Naive thymus-derived CD4-positive, alpha-beta T cell (primary cell): ENCODE measurements at regions of chr6 and their contacts with region 1.

Region 1: DNA sequence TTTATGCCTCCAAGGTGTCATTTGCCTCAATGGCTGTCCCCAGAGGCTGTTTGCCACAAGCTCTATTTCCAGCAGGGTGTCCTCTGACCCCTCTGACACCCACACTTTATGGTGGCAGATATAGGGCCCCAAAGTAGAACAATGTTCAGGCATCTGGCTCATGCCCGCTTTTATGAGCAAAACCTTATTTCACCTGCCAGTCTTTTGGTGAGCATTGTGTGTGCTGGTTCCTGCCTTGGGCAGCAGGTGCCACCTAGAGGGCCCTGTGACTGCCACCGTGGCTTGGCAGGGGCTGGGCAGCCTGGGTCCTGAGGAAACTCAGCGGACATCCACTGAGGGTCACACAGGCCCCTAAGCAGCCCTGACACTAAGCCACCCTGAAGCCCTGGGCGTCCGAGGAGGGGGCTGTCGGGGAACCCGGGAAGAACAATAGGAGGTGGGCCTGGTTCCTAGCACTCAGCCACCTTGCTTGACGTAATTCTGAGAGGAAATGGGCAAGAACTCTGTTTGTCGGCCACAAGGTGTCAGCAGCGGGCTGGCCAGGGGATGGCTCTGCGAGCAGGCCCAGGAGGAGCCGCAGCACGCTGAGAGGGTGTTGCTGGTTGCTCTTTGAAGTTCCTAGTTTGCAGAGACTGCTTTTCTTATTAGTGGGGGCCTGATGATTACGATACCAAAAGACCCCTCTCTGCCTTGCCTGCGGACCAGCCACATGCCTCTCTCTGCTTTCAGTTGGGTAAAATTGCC is 148.9 kb downstream of the SCML4 start:
- DNase-seq: peak; percentile 77 to 90 (median 86)
- ATAC-seq: peak; percentile 97
- H3K4me3 ChIP-seq: peak overlapping the region; percentile 36
- H3K4me3 Mint-ChIP-seq: peak overlapping the region in 8 of 10 donors; percentile 49 to 83 (median 76)
- H3K27ac ChIP-seq: peak overlapping the region; percentile 71
- H3K27ac Mint-ChIP-seq: peak overlapping the region; percentile 74 to 96 (median 85)
- H3K4me1 ChIP-seq: peaks cover 0 to 10% of the 10 kb centered on the region in 2 donors
- H3K4me1 Mint-ChIP-seq: peaks cover 0 to 17% (median 9%) of the 10 kb centered on the region in 7 donors
- H3K27me3 ChIP-seq: no peaks in the 10 kb centered on the region
- H3K27me3 Mint-ChIP-seq: peaks cover 0 to 15% (median 0%) of the 10 kb centered on the region in 5 donors

Region 2: GRCh38 chr6:106339334-106340029 is 1335.7 kb before region 1 on chr6:
- CTCF ChIA-PET with region 1: no interaction called
- POLR2A ChIA-PET with region 1: no interaction called
- intact Hi-C with region 1: loop called in 1 of 2 experiments (anchors 10 kb)
- DNase-seq: peak in 8 of 9 donors; percentile 19 to 50 (median 35)
- ATAC-seq: peak; percentile 88
- H3K4me3 ChIP-seq: no peak overlapping the region
- H3K4me3 Mint-ChIP-seq: peak overlapping the region in 7 of 10 donors; percentile 15 to 67 (median 44)
- H3K27ac ChIP-seq: no peak overlapping the region
- H3K27ac Mint-ChIP-seq: no peak overlapping the region
- H3K4me1 ChIP-seq: no peaks in the 10 kb centered on the region
- H3K4me1 Mint-ChIP-seq: peaks cover 0 to 9% (median 6%) of the 10 kb centered on the region in 7 donors
- H3K27me3 ChIP-seq: no peaks in the 10 kb centered on the region
- H3K27me3 Mint-ChIP-seq: peaks cover 14 to 44% (median 20%) of the 10 kb centered on the region in 5 donors

Region 3: DNA sequence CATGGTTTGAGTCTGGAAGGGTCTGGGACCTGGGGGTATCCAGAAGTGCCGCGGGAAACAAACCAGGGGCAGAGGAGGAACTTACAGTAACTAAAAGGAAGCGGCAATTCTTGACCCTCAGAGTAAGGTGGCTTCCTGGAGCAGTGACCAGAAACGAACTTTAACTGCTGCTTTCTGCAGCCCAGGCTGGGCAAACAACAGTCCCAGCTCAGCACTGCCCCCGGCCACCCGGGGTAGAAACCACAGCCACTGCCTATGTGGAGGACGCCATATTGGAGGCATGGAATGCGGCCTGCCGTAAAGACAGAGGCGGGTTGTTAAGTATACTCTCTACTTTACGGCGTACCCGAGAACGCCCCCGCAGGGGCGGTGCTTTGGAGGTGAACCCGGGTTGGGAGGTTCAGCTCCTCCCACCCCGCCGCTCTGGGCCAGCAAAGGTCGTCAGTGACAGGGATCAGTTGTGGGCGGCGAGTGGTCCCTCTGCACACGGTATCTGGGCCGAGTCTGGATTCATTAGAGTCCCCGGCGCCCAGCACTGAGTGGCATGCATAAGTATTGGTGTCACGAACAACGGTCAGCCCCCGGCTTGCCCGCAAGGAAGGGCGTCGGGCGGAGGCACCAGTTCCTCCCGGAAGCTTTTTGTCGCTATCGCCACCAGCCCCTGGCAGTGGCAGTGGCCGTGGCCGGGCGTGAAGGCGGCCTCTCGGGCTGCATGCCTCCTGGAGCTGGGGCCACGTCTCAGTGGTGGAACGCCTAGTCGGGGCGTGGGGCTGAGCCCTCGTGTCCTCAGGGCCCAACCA is 215.7 kb before region 1 on chr6 and contains the start of gene PDSS2:
- CTCF ChIA-PET with region 1: no interaction called
- POLR2A ChIA-PET with region 1: no interaction called
- intact Hi-C with region 1: loop called in 1 of 2 experiments (anchors 1 kb)
- DNase-seq: peak; percentile 83 to 98 (median 95)
- ATAC-seq: peak; percentile 100
- H3K4me3 ChIP-seq: peak within 1 kb of the TSS; percentile 95
- H3K4me3 Mint-ChIP-seq: peak within 1 kb of the TSS; percentile 87 to 99 (median 96)
- H3K27ac ChIP-seq: peak within 1 kb of the TSS; percentile 75
- H3K27ac Mint-ChIP-seq: peak within 1 kb of the TSS; percentile 92 to 99 (median 96)
- H3K4me1 ChIP-seq: peaks cover 5% of the 10 kb centered on the region in 2 donors
- H3K4me1 Mint-ChIP-seq: peaks cover 10 to 41% (median 36%) of the 10 kb centered on the region in 7 donors
- H3K27me3 ChIP-seq: no peaks in the 10 kb centered on the region
- H3K27me3 Mint-ChIP-seq: peaks cover 0 to 7% (median 0%) of the 10 kb centered on the region in 5 donors
- total RNA-seq, gene PDSS2: 12.0 to 15.3 (median 12.1) TPM

Region 4: DNA sequence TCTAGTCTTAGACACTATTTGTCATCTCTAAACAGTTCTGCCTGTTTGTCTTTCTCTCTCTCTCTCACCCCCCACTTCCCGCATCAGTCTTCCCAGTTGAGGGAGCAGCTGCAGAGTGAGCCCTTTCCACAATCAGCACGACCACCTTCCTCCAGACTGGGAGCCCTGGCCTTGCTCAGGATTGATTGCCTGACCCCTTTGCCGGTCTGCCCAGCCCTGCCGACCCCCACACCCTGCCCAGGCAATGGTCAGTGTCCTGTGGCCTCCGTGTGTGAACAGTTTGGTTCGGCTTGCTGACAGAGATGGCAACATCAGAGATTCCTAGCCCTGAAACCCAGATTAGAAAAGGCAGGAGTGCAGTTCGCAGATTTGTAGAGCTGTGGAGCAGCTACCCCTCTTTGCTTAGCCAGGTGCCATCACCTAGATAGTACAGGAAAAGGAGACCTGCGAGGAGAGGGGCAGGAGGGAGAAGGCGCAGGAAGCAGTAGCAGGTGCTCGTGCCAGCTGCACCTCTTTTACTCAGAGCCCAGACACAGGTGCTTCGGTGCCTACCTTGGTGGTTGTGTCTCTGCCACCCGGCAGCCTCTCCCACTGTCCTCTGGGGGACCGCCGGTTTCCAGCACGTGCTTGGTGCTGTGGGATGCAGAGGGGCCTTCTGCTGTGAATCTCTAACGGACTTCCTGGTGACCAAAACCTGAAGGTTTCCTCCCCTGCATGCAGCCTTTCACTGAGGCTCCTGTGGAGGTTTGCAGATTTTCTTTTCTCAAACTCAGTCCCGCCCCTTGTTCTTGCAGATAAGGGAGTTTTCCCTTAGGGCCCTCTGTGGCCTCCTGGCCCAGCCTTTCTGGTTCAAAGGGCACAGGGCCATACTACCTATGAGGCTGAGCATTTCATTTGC is 56.5 kb after region 1 on chr6:
- CTCF ChIA-PET with region 1: interaction called, 6 read pairs
- POLR2A ChIA-PET with region 1: no interaction called
- intact Hi-C with region 1: loop called in 1 of 2 experiments (anchors 1 kb)
- DNase-seq: peak in 7 of 9 donors; percentile 45 to 64 (median 58)
- ATAC-seq: peak; percentile 53
- H3K4me3 ChIP-seq: peak overlapping the region; percentile 68
- H3K4me3 Mint-ChIP-seq: peak overlapping the region; percentile 85 to 99 (median 97)
- H3K27ac ChIP-seq: peak overlapping the region; percentile 77
- H3K27ac Mint-ChIP-seq: peak overlapping the region; percentile 77 to 98 (median 95)
- H3K4me1 ChIP-seq: peaks cover 55 to 65% of the 10 kb centered on the region in 2 donors
- H3K4me1 Mint-ChIP-seq: peaks cover 56 to 86% (median 76%) of the 10 kb centered on the region in 7 donors
- H3K27me3 ChIP-seq: no peaks in the 10 kb centered on the region
- H3K27me3 Mint-ChIP-seq: peaks cover 0 to 13% (median 0%) of the 10 kb centered on the region in 5 donors

Region 5: GRCh38 chr6:107866606-107867301 is 191.6 kb after region 1 on chr6:
- CTCF ChIA-PET with region 1: interaction called, 63 read pairs
- POLR2A ChIA-PET with region 1: interaction called, 3 read pairs
- intact Hi-C with region 1: loop called (anchors 1 kb)
- DNase-seq: peak in 7 of 9 donors; percentile 29 to 64 (median 52)
- ATAC-seq: peak; percentile 76
- H3K4me3 ChIP-seq: no peak overlapping the region
- H3K4me3 Mint-ChIP-seq: peak overlapping the region in 1 of 10 donors; percentile 32
- H3K27ac ChIP-seq: no peak overlapping the region
- H3K27ac Mint-ChIP-seq: peak overlapping the region in 3 of 9 donors; percentile 37 to 64 (median 45)
- H3K4me1 ChIP-seq: no peaks in the 10 kb centered on the region
- H3K4me1 Mint-ChIP-seq: peaks cover 0 to 10% (median 4%) of the 10 kb centered on the region in 7 donors
- H3K27me3 ChIP-seq: no peaks in the 10 kb centered on the region
- H3K27me3 Mint-ChIP-seq: peaks cover 0 to 10% (median 0%) of the 10 kb centered on the region in 5 donors

Region 6: GRCh38 chr6:108312605-108313004 is 637.4 kb after region 1 on chr6:
- CTCF ChIA-PET with region 1: no interaction called
- POLR2A ChIA-PET with region 1: no interaction called
- intact Hi-C with region 1: no loop called
- DNase-seq: no peak
- ATAC-seq: no peak
- H3K4me3 ChIP-seq: no peak overlapping the region
- H3K4me3 Mint-ChIP-seq: no peak overlapping the region
- H3K27ac ChIP-seq: no peak overlapping the region
- H3K27ac Mint-ChIP-seq: no peak overlapping the region
- H3K4me1 ChIP-seq: no peaks in the 10 kb centered on the region
- H3K4me1 Mint-ChIP-seq: peaks cover 0 to 7% (median 0%) of the 10 kb centered on the region in 7 donors
- H3K27me3 ChIP-seq: no peaks in the 10 kb centered on the region
- H3K27me3 Mint-ChIP-seq: no peaks in the 10 kb centered on the region

Region 7: DNA sequence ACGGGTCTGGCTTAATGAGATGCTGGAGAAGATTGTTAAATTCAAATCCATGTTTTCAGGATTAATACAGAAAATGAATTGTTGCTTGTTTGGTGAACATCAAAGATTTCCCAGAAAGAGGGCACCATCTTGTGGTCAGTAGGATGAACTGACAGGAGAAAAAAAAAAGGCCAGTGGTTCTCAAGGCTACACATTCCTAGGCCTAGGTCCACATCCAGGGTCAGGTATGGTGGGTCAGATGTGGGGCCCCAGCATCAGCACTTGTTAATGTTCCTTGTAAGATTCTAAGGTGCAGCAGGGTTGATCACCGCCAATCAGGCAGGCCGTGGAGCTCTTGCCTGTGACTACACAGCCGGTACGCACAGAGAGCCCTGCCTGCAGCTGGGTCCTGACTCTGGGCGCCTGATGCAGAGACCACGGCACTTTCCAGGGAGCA is 851.6 kb after region 1 on chr6:
- CTCF ChIA-PET with region 1: no interaction called
- POLR2A ChIA-PET with region 1: no interaction called
- intact Hi-C with region 1: loop called in 1 of 2 experiments (anchors 1 kb)
- DNase-seq: peak in 3 of 9 donors; percentile 7 to 28 (median 17)
- ATAC-seq: peak; percentile 47
- H3K4me3 ChIP-seq: no peak overlapping the region
- H3K4me3 Mint-ChIP-seq: no peak overlapping the region
- H3K27ac ChIP-seq: no peak overlapping the region
- H3K27ac Mint-ChIP-seq: no peak overlapping the region
- H3K4me1 ChIP-seq: no peaks in the 10 kb centered on the region
- H3K4me1 Mint-ChIP-seq: no peaks in the 10 kb centered on the region
- H3K27me3 ChIP-seq: no peaks in the 10 kb centered on the region
- H3K27me3 Mint-ChIP-seq: peaks cover 0 to 9% (median 0%) of the 10 kb centered on the region in 5 donors

Region 8: DNA sequence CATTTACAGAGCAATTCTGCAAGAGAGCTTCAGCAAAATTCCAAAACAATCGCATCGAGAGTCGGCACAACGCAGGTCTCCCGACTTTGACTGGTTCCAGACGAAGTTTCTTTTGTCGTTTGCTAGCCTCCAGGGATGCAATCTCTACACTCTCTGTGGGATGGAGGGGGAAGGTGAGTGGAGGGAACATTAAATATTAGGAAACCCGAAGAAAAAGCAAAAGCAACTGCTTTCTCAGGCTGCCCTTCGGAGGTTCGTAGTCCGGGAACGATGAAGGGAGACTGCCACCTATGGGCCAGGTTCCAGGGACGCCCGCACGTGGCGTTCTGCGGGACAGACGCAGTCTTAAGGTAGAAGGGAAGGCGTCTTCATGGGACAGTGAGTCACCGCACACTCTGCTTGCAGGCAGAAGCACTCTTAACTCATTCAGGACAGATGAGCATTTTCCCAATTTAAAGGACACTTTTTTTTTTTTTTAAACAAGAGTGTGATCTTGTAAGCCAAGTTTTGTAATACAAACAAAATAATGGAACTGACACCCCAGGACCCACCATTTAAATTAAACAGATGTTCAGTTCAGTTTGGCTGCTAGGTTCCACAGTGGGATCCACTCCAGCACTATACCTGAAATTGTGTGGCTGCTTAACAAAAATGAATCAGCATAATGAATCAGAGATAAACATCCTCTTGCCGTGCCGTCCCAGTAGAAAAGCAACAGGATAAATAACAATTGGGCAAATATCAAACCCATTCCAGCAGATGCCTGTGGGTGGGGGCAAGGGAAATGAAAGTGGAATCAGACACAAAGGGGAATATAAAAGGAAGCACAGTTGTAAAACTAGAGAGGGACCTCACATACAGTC is 1107.2 kb after region 1 on chr6:
- CTCF ChIA-PET with region 1: no interaction called
- POLR2A ChIA-PET with region 1: no interaction called
- intact Hi-C with region 1: no loop called
- DNase-seq: peak; percentile 56 to 76 (median 71)
- ATAC-seq: peak; percentile 98
- H3K4me3 ChIP-seq: peak overlapping the region; percentile 52
- H3K4me3 Mint-ChIP-seq: peak overlapping the region; percentile 46 to 93 (median 87)
- H3K27ac ChIP-seq: no peak overlapping the region
- H3K27ac Mint-ChIP-seq: peak overlapping the region in 3 of 9 donors; percentile 47 to 64 (median 51)
- H3K4me1 ChIP-seq: no peaks in the 10 kb centered on the region
- H3K4me1 Mint-ChIP-seq: peaks cover 0 to 17% (median 10%) of the 10 kb centered on the region in 7 donors
- H3K27me3 ChIP-seq: no peaks in the 10 kb centered on the region
- H3K27me3 Mint-ChIP-seq: peaks cover 0 to 73% (median 5%) of the 10 kb centered on the region in 5 donors